Activated CD4-positive, alpha-beta T cell treated with anti-CD3 and anti-CD28 coated beads for 36 hours (primary cell): ENCODE measurements at regions of chr17 and their contacts with region 1.

Region 1: GRCh38 chr17:2054512-2055291 is at the start of gene HIC1:
- DNase-seq: peak; percentile 89
- ATAC-seq: peak; percentile 62
- H3K4me3 Mint-ChIP-seq: peak within 1 kb of the TSS; percentile 69
- H3K27ac Mint-ChIP-seq: no peak within 1 kb of the TSS
- H3K4me1 Mint-ChIP-seq: peaks cover 21% of the 10 kb centered on the region
- H3K27me3 Mint-ChIP-seq: peaks cover 18% of the 10 kb centered on the region
- total RNA-seq, gene HIC1: 13.6 to 16.5 TPM

Region 2: GRCh38 chr17:1829592-1830257 is 225.0 kb before region 1 on chr17 and contains the starts of genes RPA1 and SMYD4:
- CTCF ChIA-PET with region 1: no interaction called
- POLR2A ChIA-PET with region 1: no interaction called
- intact Hi-C with region 1: no loop called
- DNase-seq: peak; percentile 95
- ATAC-seq: peak; percentile 98
- H3K4me3 Mint-ChIP-seq: peak within 1 kb of the TSS; percentile 98
- H3K27ac Mint-ChIP-seq: peak within 1 kb of the TSS; percentile 93
- H3K4me1 Mint-ChIP-seq: peaks cover 59% of the 10 kb centered on the region
- H3K27me3 Mint-ChIP-seq: no peaks in the 10 kb centered on the region
- total RNA-seq, gene RPA1: 134 to 191 TPM
- total RNA-seq, gene SMYD4: 19.7 to 19.8 TPM

Region 3: GRCh38 chr17:2070241-2071023 is 15.7 kb after region 1 on chr17:
- CTCF ChIA-PET with region 1: interaction called, 55 read pairs
- POLR2A ChIA-PET with region 1: no interaction called
- intact Hi-C with region 1: loop called in 1 of 2 experiments (anchors 1 kb)
- DNase-seq: peak; percentile 91
- ATAC-seq: peak; percentile 88
- H3K4me3 Mint-ChIP-seq: peak overlapping the region; percentile 36
- H3K27ac Mint-ChIP-seq: peak overlapping the region; percentile 82
- H3K4me1 Mint-ChIP-seq: peaks cover 36% of the 10 kb centered on the region
- H3K27me3 Mint-ChIP-seq: peaks cover 3% of the 10 kb centered on the region

Region 4: GRCh38 chr17:2179615-2180295 is 125.1 kb after region 1 on chr17:
- CTCF ChIA-PET with region 1: no interaction called
- POLR2A ChIA-PET with region 1: interaction called, 8 read pairs
- intact Hi-C with region 1: loop called in 1 of 2 experiments (anchors 5 kb)
- DNase-seq: no peak
- ATAC-seq: no peak
- H3K4me3 Mint-ChIP-seq: no peak overlapping the region
- H3K27ac Mint-ChIP-seq: no peak overlapping the region
- H3K4me1 Mint-ChIP-seq: no peaks in the 10 kb centered on the region
- H3K27me3 Mint-ChIP-seq: no peaks in the 10 kb centered on the region

Region 5: GRCh38 chr17:2253768-2254406 is 199.2 kb after region 1 on chr17:
- CTCF ChIA-PET with region 1: interaction called, 17 read pairs
- POLR2A ChIA-PET with region 1: interaction called, 3 read pairs
- intact Hi-C with region 1: no loop called
- DNase-seq: peak; percentile 59
- ATAC-seq: peak; percentile 94
- H3K4me3 Mint-ChIP-seq: peak overlapping the region; percentile 22
- H3K27ac Mint-ChIP-seq: peak overlapping the region; percentile 84
- H3K4me1 Mint-ChIP-seq: peaks cover 69% of the 10 kb centered on the region
- H3K27me3 Mint-ChIP-seq: no peaks in the 10 kb centered on the region

Region 6: DNA sequence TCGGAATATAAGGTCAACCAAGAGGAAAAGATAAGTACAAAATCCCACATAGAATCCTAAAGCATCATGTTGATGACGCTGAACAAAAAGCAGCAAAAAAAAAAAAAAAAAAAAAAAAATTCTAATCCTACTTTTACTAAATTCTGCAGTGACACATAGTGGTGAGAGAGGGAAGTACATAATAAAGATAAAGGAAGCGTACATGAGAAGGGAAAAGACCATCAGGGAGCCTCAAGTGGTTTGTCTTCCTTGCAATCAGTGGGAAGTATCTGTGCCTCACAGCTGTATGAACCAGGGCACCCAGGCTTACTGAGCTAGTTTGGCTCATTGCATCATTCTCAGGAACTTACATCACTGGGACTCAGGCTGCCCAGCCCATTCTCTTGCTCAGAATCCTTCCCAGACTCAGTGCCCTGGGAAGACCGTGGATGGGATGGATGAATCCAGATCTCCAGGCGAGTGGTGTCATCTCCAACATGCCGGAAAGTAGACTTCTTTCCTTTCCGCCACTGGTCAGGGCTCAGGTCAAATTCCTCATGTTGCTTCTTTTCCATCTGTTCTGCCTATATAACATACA is 227.7 kb after region 1 on chr17:
- CTCF ChIA-PET with region 1: interaction called, 20 read pairs
- POLR2A ChIA-PET with region 1: interaction called, 5 read pairs
- intact Hi-C with region 1: loop called (anchors 1 kb)
- DNase-seq: no peak
- ATAC-seq: peak; percentile 80
- H3K4me3 Mint-ChIP-seq: no peak overlapping the region
- H3K27ac Mint-ChIP-seq: peak overlapping the region; percentile 58
- H3K4me1 Mint-ChIP-seq: peaks cover 31% of the 10 kb centered on the region
- H3K27me3 Mint-ChIP-seq: no peaks in the 10 kb centered on the region

Region 7: DNA sequence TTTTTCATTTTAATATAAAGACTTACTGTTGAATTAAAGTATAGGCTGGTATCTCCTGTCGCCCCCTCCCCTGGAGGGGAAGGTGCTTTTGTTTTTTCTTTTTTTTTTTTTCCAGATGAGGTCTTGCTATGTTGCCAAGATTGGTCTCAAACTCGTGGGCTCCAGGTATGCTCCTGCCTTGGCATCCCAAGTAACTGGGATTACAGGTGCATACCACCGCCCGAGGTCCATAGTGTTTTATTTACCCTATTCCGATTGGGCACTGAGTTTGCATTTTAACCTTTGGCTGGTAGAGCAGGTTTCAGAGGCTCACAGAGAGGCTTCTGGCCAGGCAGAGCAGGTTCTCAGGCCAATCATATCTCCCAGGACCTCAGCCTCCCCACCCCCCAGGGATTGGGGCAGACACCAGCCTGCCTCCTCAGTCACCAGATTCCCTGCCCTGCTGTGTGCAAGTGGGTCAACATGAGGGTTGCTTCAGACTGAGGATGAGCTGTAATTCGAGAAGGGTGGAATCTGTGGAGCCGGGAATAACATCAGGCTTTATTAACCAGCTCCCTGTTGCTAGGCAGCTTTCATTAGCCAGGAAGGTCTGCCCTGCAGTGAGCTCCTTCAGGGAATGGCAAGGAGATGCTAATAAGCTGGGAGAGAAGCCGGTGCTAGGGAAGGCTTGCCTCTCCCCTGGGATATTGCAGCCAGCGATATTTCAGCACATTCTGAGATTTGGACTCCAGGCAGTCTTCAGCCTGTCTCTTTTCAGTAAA is 293.0 kb after region 1 on chr17:
- CTCF ChIA-PET with region 1: interaction called, 4 read pairs
- POLR2A ChIA-PET with region 1: no interaction called
- intact Hi-C with region 1: loop called in 1 of 2 experiments (anchors 5 kb)
- DNase-seq: no peak
- ATAC-seq: no peak
- H3K4me3 Mint-ChIP-seq: no peak overlapping the region
- H3K27ac Mint-ChIP-seq: no peak overlapping the region
- H3K4me1 Mint-ChIP-seq: peaks cover 6% of the 10 kb centered on the region
- H3K27me3 Mint-ChIP-seq: no peaks in the 10 kb centered on the region